ENCODE measurements at regions of chr6 and their contacts with region 1.

Region 1: GRCh38 chr6:152338335-152339125 is 298.6 kb downstream of the SYNE1 start:
- DNase-seq: peak; percentile 66
- ATAC-seq: peak; percentile 77
- H3K4me3 Mint-ChIP-seq: no peak overlapping the region
- H3K27ac Mint-ChIP-seq: no peak overlapping the region
- H3K4me1 Mint-ChIP-seq: peaks cover 5% of the 10 kb centered on the region
- H3K27me3 Mint-ChIP-seq: peaks cover 7% of the 10 kb centered on the region

Region 2: GRCh38 chr6:151690768-151691562 is 647.6 kb before region 1 on chr6:
- CTCF ChIA-PET with region 1: interaction called, 12 read pairs
- POLR2A ChIA-PET with region 1: no interaction called
- DNase-seq: peak; percentile 49
- ATAC-seq: peak; percentile 91
- H3K4me3 Mint-ChIP-seq: peak overlapping the region; percentile 69
- H3K27ac Mint-ChIP-seq: peak overlapping the region; percentile 75
- H3K4me1 Mint-ChIP-seq: peaks cover 18% of the 10 kb centered on the region
- H3K27me3 Mint-ChIP-seq: peaks cover 4% of the 10 kb centered on the region

Region 3: DNA sequence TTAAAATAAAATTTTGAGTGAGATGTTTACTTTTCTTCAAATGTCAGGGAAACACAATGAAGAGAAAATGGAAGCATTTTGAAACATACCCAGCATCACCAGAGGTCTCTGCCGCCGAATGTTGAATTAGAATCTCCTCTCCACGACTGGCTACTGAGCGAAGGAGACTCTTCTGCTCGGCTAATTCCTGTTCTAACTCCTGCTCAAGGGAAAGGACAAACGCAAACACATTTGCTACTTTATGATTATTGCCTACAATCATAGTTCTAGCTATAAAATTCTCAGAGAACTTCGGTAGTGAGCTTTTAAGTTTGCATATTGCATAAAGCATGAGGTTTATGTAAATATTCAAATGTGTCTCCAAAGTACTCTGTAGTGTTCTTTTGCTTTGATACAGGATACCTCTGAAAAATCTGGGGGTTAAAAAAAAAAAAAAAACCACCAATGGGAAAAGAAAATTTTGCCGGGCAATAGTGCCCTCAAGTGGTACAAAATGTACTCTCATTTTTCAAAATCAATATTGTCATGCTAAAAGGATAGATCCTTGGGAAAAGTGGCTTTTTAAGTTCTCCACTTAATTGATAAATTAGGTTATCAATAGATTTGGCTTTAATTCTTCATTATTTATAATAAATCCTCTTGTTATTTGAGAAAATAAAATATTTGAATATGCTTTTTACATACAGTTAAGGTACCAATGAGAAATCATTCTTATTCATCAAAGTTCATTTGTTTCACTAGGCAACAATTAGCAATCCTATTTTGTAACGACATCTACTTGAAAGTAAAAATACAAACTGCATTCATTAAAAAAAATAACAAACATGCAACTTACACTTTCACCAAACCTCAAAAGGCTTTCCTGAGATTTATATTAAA is 70.3 kb before region 1 on chr6:
- CTCF ChIA-PET with region 1: interaction called, 11 read pairs
- POLR2A ChIA-PET with region 1: no interaction called
- DNase-seq: peak; percentile 43
- ATAC-seq: no peak
- H3K4me3 Mint-ChIP-seq: no peak overlapping the region
- H3K27ac Mint-ChIP-seq: no peak overlapping the region
- H3K4me1 Mint-ChIP-seq: peaks cover 10% of the 10 kb centered on the region
- H3K27me3 Mint-ChIP-seq: no peaks in the 10 kb centered on the region

Region 4: GRCh38 chr6:152301764-152302568 is 36.6 kb before region 1 on chr6:
- CTCF ChIA-PET with region 1: interaction called, 60 read pairs
- POLR2A ChIA-PET with region 1: interaction called, 12 read pairs
- DNase-seq: peak; percentile 93
- ATAC-seq: peak; percentile 98
- H3K4me3 Mint-ChIP-seq: peak overlapping the region; percentile 99
- H3K27ac Mint-ChIP-seq: peak overlapping the region; percentile 99
- H3K4me1 Mint-ChIP-seq: peaks cover 22% of the 10 kb centered on the region
- H3K27me3 Mint-ChIP-seq: no peaks in the 10 kb centered on the region

Region 5: GRCh38 chr6:152316024-152316423 is 22.5 kb before region 1 on chr6:
- CTCF ChIA-PET with region 1: interaction called, 13 read pairs
- POLR2A ChIA-PET with region 1: no interaction called
- DNase-seq: no peak
- ATAC-seq: no peak
- H3K4me3 Mint-ChIP-seq: no peak overlapping the region
- H3K27ac Mint-ChIP-seq: no peak overlapping the region
- H3K4me1 Mint-ChIP-seq: peaks cover 9% of the 10 kb centered on the region
- H3K27me3 Mint-ChIP-seq: peaks cover 9% of the 10 kb centered on the region

Region 6: DNA sequence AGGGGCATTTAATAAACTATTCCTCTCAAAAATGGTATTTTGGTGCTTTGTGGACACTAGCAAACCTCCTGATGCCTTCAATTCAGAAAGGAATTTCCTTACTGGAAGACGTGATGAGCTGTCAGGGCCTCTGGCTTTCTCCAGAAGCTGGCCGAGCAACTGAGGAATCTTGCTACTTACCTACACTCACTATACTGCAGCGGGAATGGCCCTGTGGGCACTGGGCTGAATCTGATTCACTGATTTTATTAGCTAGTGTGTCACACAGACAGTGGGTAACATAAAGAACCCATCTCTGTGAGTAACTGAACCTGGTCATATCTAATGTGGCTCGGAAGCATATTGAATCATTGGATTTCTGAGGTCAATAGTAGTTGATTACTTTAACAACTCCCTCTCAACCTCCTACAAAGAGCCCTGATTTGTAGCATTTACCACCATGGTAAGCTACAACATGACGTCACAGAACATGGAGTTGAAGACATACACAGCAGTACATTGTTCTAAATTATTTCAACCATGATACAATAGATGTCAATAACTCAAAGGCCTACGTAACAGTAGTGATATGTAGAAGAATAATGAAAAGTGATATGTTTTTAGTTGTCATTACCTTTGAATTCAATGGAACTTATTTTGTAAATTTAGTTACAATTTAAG is 66.5 kb after region 1 on chr6:
- CTCF ChIA-PET with region 1: no interaction called
- POLR2A ChIA-PET with region 1: no interaction called
- DNase-seq: no peak
- ATAC-seq: no peak
- H3K4me3 Mint-ChIP-seq: no peak overlapping the region
- H3K27ac Mint-ChIP-seq: no peak overlapping the region
- H3K4me1 Mint-ChIP-seq: no peaks in the 10 kb centered on the region
- H3K27me3 Mint-ChIP-seq: peaks cover 3% of the 10 kb centered on the region

Region 7: GRCh38 chr6:152563177-152563576 is 224.6 kb after region 1 on chr6:
- CTCF ChIA-PET with region 1: no interaction called
- POLR2A ChIA-PET with region 1: no interaction called
- DNase-seq: no peak
- ATAC-seq: no peak
- H3K4me3 Mint-ChIP-seq: no peak overlapping the region
- H3K27ac Mint-ChIP-seq: no peak overlapping the region
- H3K4me1 Mint-ChIP-seq: no peaks in the 10 kb centered on the region
- H3K27me3 Mint-ChIP-seq: no peaks in the 10 kb centered on the region

Region 8: GRCh38 chr6:152575621-152576150 is 237.2 kb after region 1 on chr6:
- CTCF ChIA-PET with region 1: no interaction called
- POLR2A ChIA-PET with region 1: no interaction called
- DNase-seq: no peak
- ATAC-seq: no peak
- H3K4me3 Mint-ChIP-seq: no peak overlapping the region
- H3K27ac Mint-ChIP-seq: no peak overlapping the region
- H3K4me1 Mint-ChIP-seq: no peaks in the 10 kb centered on the region
- H3K27me3 Mint-ChIP-seq: no peaks in the 10 kb centered on the region